ENCODE measurements at regions of chr1 and their contacts with region 1.

Region 1: DNA sequence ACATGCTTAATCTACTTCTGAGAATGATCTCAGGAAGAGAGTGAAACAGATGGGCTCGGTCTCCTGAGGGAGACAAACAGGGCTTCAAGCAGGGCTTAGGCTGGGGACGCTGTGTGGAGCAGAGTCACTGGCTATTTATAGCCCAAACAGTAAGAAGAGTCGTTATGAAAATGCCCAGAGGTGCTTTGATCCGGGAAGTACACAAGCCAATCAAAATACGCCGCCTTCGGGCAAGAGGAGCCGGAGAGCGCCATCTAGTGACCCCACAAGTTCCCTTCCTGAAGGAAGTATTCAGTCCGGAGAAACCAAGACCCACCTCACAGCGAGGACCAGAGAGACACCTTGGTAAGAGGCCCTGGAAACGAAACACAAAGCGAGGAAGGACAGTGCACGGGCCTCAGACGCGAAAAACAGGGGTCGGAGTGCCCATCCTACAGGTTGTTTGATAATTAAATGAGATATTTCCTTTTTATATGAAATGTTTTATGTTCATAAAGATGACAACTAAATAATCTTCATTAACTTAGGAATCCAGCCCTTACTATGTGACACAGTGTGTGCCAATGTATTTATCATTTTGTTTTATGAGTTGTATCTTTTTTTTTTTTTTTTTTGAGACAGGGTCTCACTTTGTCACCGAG is 25.0 kb upstream of the SCCPDH start:
- DNase-seq: peak; percentile 93
- H3K4me3 Mint-ChIP-seq: peak overlapping the region; percentile 22
- H3K27ac Mint-ChIP-seq: peak overlapping the region; percentile 32
- H3K4me1 Mint-ChIP-seq: peaks cover 8% of the 10 kb centered on the region
- H3K27me3 Mint-ChIP-seq: no peaks in the 10 kb centered on the region

Region 2: DNA sequence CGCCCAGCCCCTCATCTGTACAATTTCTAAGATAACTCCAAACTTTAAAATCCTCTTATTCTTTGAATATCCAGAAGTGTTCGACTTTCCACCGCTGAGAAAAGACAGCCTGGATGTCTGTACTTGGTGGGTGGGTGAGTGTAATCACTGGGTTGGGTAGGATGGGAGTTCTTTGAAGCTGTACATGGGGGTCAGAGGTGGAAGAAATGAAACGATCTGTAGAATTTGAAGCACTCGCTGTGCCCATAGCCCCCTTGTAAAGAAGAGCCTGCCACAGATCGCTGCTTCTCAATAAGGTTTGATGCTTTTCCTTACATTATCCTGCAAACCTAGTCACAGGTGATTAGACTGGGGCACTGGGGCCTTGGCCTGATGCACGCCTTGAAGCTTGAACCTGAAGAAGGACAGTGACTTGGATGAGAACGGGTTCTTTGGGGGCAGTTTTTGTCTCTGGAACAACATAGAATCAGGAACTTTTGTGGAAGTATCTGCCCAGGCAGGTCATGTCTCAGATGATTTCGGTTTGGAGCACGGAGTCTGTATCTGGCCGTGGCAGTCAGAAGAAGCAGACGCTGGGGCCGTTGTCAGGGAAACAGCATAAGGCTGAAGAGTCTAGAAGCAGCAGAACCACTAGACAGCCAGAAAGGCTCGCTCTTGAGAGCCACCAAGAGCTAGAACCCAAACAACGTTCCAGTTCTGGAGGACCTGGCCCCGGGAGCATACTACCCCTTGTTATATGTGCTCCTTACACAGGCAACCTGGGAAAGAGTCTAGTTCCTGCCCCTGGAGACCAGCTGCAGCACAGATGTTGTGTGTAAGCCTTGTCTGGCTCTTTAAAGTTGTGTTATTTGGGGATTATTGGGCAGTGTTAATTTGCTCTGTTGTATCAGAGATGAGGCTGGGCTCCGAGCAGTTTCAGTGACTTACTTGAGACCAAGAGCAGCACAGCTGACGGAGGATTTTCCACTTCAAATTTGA is 20.1 kb before region 1 on chr1:
- intact Hi-C with region 1: no loop called
- DNase-seq: no peak
- H3K4me3 Mint-ChIP-seq: no peak overlapping the region
- H3K27ac Mint-ChIP-seq: no peak overlapping the region
- H3K4me1 Mint-ChIP-seq: no peaks in the 10 kb centered on the region
- H3K27me3 Mint-ChIP-seq: no peaks in the 10 kb centered on the region

Region 3: DNA sequence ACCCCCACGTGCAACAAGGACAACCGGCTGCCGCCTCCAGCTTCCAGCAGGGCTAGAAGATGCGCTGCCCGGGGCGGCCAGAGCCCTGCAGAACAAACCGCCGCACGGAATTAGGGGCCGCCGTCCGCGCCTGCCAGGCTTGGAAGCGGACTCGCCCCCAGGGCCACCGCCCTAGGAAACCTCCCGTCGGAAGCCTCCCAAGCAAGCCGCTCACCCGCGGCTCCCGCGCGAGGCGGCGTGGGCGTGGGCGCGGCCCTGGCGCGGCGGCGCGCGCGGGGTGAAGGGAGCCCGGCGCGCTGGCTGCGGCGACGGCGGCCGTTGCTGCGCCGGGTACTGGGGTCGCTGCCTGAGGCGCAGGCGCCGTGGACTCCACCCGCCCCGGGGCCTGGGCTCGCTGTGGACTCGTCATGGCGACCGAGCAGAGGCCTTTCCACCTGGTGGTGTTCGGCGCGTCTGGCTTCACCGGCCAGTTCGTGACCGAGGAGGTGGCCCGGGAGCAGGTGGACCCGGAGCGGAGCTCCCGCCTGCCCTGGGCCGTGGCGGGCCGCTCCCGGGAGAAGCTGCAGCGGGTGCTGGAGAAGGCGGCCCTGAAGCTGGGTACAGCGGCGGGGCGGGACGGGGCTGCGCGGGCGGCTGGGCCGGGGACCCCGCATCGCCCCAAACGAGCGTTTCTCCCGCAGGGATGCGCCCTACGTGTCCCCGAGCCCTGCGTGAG is 25.0 kb after region 1 on chr1 and contains the start of gene SCCPDH:
- intact Hi-C with region 1: loop called (anchors 1 kb)
- DNase-seq: peak; percentile 91
- H3K4me3 Mint-ChIP-seq: peak within 1 kb of the TSS; percentile 91
- H3K27ac Mint-ChIP-seq: peak within 1 kb of the TSS; percentile 84
- H3K4me1 Mint-ChIP-seq: peaks cover 5% of the 10 kb centered on the region
- H3K27me3 Mint-ChIP-seq: no peaks in the 10 kb centered on the region
- total RNA-seq, gene SCCPDH: 31.7 and 32.3 TPM in 2 replicates

Measured in activated CD4-positive, alpha-beta T cell treated with anti-CD3 and anti-CD28 coated beads, Interleukin-2, amount 10 ng/mL, durations not matched to agents 24 days and 14 days (primary cell).